B cell (primary cell): ENCODE measurements at regions of chr11 and their contacts with region 1.

Region 1: GRCh38 chr11:118435893-118436624 is at the start of gene KMT2A:
- DNase-seq: peak; percentile 98
- ATAC-seq: peak; percentile 67
- H3K4me3 ChIP-seq: peak within 1 kb of the TSS; percentile 80 to 93 (median 87)
- H3K4me3 Mint-ChIP-seq: peak within 1 kb of the TSS; percentile 97
- H3K27ac ChIP-seq: peak within 1 kb of the TSS; percentile 83 to 94
- H3K27ac Mint-ChIP-seq: peak within 1 kb of the TSS; percentile 99
- H3K4me1 ChIP-seq: peaks cover 24 to 31% of the 10 kb centered on the region in 2 donors
- H3K4me1 Mint-ChIP-seq: peaks cover 42% of the 10 kb centered on the region
- H3K27me3 ChIP-seq: no peaks in the 10 kb centered on the region
- H3K27me3 Mint-ChIP-seq: no peaks in the 10 kb centered on the region
- CTCF ChIP-seq: no peak
- total RNA-seq, gene KMT2A: 175 and 198 TPM in 2 replicates

Region 2: DNA sequence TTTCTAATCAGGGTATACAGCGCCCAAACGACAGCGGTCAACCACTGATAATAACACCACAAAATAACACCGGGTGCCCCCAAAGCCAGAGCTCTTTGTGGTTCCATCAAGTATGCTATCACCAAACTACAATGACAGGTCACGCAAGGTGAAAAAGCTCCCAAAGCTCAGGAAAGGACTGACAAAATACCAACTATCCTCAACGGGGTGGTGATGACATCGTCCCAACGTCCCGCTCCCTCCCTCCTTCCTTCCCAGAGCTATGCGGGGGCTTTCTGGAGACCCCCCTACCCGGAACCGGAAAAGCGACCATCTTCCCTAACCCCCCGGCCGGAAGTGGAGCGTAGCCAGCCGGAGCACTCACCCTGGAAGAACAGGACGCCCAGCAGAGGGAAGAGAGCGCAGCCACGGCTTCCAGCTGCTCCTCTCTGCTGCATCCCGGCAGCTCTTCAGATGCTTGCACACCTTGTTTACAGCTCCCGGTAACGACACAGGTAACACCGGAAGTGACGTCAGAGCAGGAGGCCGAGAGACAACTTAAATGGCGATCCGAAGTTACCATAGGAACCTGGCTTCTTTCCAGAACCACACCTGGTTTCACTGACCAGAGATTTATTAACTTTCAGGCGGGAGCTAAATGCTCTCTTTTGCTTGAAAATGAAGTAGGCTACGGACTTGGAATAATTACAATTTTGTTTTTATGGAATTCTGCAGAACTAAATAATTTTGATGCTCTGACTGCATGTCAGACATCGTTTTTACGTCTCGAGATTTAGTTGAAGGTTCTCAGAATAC is 184.0 kb before region 1 on chr11 and contains the start of gene MPZL3:
- CTCF ChIA-PET with region 1: interaction called, 3 read pairs
- POLR2A ChIA-PET with region 1: no interaction called
- intact Hi-C with region 1: loop called (anchors 5 kb)
- DNase-seq: peak; percentile 95
- ATAC-seq: peak; percentile 76
- H3K4me3 ChIP-seq: peak within 1 kb of the TSS; percentile 96 to 100 (median 97)
- H3K4me3 Mint-ChIP-seq: peak within 1 kb of the TSS; percentile 98
- H3K27ac ChIP-seq: peak within 1 kb of the TSS; percentile 91 to 97
- H3K27ac Mint-ChIP-seq: peak within 1 kb of the TSS; percentile 99
- H3K4me1 ChIP-seq: peaks cover 6 to 10% of the 10 kb centered on the region in 2 donors
- H3K4me1 Mint-ChIP-seq: peaks cover 13% of the 10 kb centered on the region
- H3K27me3 ChIP-seq: no peaks in the 10 kb centered on the region
- H3K27me3 Mint-ChIP-seq: peaks cover 20% of the 10 kb centered on the region
- CTCF ChIP-seq: no peak
- total RNA-seq, gene MPZL3: 4.2 and 4.9 TPM in 2 replicates

Region 3: DNA sequence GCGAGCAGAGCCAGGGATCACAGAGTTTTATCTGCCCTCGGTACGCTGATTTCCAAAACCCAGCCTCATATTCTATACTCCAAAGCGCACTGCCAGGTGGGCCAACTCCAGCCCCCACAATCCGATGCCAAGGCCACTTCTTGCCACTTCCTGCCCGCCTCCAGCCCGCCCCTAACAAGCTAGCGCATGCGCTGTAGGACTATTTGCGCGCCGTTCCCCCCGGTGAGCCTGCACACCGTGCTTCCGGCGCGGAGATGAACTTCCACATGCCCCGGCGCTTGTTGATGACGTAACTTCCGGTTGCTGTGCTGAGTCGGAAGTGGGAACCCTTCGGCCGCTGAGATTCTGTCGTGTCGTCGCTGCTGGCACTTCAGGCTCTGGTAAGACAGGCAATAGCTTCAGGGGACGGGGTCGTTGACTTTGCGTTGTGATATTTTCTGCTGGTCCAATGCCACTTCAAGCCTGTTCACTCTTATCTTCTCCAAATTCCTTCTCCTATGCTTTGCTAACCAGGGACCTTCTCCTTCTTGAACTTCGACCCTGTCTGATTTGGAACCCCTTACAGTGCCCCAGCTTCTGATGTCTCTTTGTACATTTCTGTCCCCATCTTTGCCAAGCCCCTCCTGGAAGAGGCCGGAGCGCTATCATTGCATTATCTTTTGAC is 76.6 kb before region 1 on chr11 and contains the start of gene UBE4A:
- CTCF ChIA-PET with region 1: no interaction called
- POLR2A ChIA-PET with region 1: no interaction called
- intact Hi-C with region 1: loop called (anchors 1 kb)
- DNase-seq: peak; percentile 97
- ATAC-seq: peak; percentile 91
- H3K4me3 ChIP-seq: peak within 1 kb of the TSS; percentile 82 to 98 (median 92)
- H3K4me3 Mint-ChIP-seq: peak within 1 kb of the TSS; percentile 98
- H3K27ac ChIP-seq: peak within 1 kb of the TSS; percentile 73 to 93
- H3K27ac Mint-ChIP-seq: peak within 1 kb of the TSS; percentile 96
- H3K4me1 ChIP-seq: peaks cover 18 to 23% of the 10 kb centered on the region in 2 donors
- H3K4me1 Mint-ChIP-seq: peaks cover 39% of the 10 kb centered on the region
- H3K27me3 ChIP-seq: no peaks in the 10 kb centered on the region
- H3K27me3 Mint-ChIP-seq: no peaks in the 10 kb centered on the region
- CTCF ChIP-seq: no peak
- total RNA-seq, gene UBE4A: 37.3 and 37.7 TPM in 2 replicates

Region 4: GRCh38 chr11:118401151-118401878 is 34.7 kb before region 1 on chr11 and contains the start of gene ATP5MG:
- CTCF ChIA-PET with region 1: interaction called, 12 read pairs
- POLR2A ChIA-PET with region 1: interaction called, 28 read pairs
- intact Hi-C with region 1: loop called (anchors 1 kb)
- DNase-seq: peak; percentile 97
- ATAC-seq: peak; percentile 84
- H3K4me3 ChIP-seq: peak within 1 kb of the TSS; percentile 77 to 96 (median 81)
- H3K4me3 Mint-ChIP-seq: peak within 1 kb of the TSS; percentile 98
- H3K27ac ChIP-seq: peak within 1 kb of the TSS; percentile 77 to 85
- H3K27ac Mint-ChIP-seq: peak within 1 kb of the TSS; percentile 100
- H3K4me1 ChIP-seq: peaks cover 27 to 32% of the 10 kb centered on the region in 2 donors
- H3K4me1 Mint-ChIP-seq: peaks cover 55% of the 10 kb centered on the region
- H3K27me3 ChIP-seq: no peaks in the 10 kb centered on the region
- H3K27me3 Mint-ChIP-seq: no peaks in the 10 kb centered on the region
- CTCF ChIP-seq: peak; percentile 18
- total RNA-seq, gene ATP5MG: 111 and 118 TPM in 2 replicates

Region 5: GRCh38 chr11:118488480-118489109 is 52.5 kb after region 1 on chr11:
- CTCF ChIA-PET with region 1: interaction called, 11 read pairs
- POLR2A ChIA-PET with region 1: no interaction called
- intact Hi-C with region 1: loop called (anchors 2 kb)
- DNase-seq: peak; percentile 84
- ATAC-seq: peak; percentile 60
- H3K4me3 ChIP-seq: no peak overlapping the region
- H3K4me3 Mint-ChIP-seq: no peak overlapping the region
- H3K27ac ChIP-seq: no peak overlapping the region
- H3K27ac Mint-ChIP-seq: no peak overlapping the region
- H3K4me1 ChIP-seq: no peaks in the 10 kb centered on the region
- H3K4me1 Mint-ChIP-seq: no peaks in the 10 kb centered on the region
- H3K27me3 ChIP-seq: no peaks in the 10 kb centered on the region
- H3K27me3 Mint-ChIP-seq: no peaks in the 10 kb centered on the region
- CTCF ChIP-seq: peak; percentile 92

Region 6: DNA sequence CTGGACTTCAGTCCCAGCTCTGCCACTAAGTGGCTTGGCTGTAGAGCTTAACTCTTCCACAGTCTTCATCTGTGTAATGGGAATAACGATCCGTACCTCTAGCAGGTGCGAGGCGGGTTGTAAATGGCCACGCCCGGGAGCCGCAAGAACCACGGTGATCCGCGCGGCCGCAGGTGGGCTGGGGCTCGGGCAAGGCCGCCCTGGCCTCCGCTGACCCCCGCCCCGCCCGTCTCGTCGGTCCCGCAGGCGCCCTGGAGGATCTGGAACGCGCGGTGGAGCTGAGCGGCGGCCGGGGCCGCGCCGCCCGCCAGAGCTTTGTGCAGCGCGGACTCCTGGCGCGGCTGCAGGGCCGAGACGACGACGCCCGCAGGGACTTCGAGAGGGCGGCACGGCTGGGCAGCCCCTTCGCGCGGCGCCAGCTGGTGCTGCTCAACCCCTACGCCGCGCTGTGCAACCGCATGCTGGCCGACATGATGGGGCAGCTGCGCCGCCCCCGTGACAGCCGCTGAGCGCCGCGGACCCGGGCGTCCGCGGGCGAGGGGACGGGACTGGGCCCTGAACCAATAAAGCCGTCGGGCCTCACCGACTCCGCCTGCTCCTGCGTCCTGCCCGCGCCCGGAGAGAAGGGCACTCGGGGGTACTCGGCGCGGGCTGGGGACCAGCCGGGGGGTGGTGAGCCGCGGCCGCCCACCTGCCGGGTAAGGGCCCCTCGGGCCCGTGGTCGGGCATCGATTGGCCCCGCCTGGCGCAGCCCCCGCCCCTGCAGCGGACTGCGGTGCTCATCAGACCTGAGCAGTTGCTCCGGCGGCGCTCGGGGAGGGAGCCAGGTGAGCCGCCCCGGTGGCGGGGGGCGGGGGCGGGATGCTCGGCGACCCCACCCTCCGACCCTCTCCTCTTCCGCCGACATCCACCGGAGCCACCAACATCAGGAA is 94.6 kb after region 1 on chr11 and contains the start of gene TMEM25:
- CTCF ChIA-PET with region 1: interaction called, 3 read pairs
- POLR2A ChIA-PET with region 1: interaction called, 4 read pairs
- intact Hi-C with region 1: loop called (anchors 2 kb)
- DNase-seq: peak; percentile 72
- ATAC-seq: peak; percentile 84
- H3K4me3 ChIP-seq: peak within 1 kb of the TSS; percentile 1 to 87 (median 73)
- H3K4me3 Mint-ChIP-seq: peak within 1 kb of the TSS; percentile 97
- H3K27ac ChIP-seq: peak within 1 kb of the TSS in 1 of 2 donors; percentile 42
- H3K27ac Mint-ChIP-seq: peak within 1 kb of the TSS; percentile 86
- H3K4me1 ChIP-seq: peaks cover 14 to 21% of the 10 kb centered on the region in 2 donors
- H3K4me1 Mint-ChIP-seq: peaks cover 24% of the 10 kb centered on the region
- H3K27me3 ChIP-seq: no peaks in the 10 kb centered on the region
- H3K27me3 Mint-ChIP-seq: no peaks in the 10 kb centered on the region
- CTCF ChIP-seq: no peak
- total RNA-seq, gene TMEM25: 16.3 and 16.9 TPM in 2 replicates

Region 7: GRCh38 chr11:118572061-118572980 is 136.3 kb after region 1 on chr11 and contains the start of gene ARCN1:
- CTCF ChIA-PET with region 1: no interaction called
- POLR2A ChIA-PET with region 1: interaction called, 3 read pairs
- intact Hi-C with region 1: loop called (anchors 5 kb)
- DNase-seq: peak; percentile 89
- ATAC-seq: peak; percentile 92
- H3K4me3 ChIP-seq: peak within 1 kb of the TSS; percentile 76 to 100 (median 99)
- H3K4me3 Mint-ChIP-seq: peak within 1 kb of the TSS; percentile 97
- H3K27ac ChIP-seq: peak within 1 kb of the TSS; percentile 95 to 97
- H3K27ac Mint-ChIP-seq: peak within 1 kb of the TSS; percentile 94
- H3K4me1 ChIP-seq: peaks cover 19 to 21% of the 10 kb centered on the region in 2 donors
- H3K4me1 Mint-ChIP-seq: peaks cover 44% of the 10 kb centered on the region
- H3K27me3 ChIP-seq: no peaks in the 10 kb centered on the region
- H3K27me3 Mint-ChIP-seq: no peaks in the 10 kb centered on the region
- CTCF ChIP-seq: no peak
- total RNA-seq, gene ARCN1: 74.7 and 83.2 TPM in 2 replicates

Region 8: DNA sequence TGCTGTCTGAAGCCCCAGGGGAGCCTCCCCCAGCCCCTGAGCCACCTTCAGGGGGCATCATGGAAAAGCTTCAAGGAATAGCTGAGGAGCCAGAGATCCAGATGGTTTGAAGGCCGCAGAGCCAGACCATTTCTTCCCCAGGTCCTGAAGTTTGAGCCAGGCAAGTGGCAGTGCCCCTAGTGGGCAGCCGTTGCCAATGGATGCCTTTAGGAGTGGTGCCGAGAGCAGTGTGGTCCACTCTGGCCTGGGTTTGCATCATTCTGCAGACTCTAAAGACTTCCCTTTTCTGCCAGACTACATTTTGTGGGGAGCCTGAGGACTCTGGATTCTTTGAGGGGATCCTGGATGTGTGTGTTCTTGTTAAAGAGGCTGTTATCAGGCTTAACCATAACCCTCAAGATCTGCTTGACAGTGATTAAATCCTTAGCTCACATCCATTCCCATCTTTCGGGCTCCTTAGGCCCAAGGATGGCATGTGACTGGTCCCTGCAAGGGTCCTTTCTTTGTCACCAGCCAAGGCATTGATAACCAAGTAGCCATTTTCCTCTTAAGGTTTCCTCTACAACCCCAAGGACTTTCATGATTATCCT is 698.4 kb after region 1 on chr11:
- CTCF ChIA-PET with region 1: no interaction called
- POLR2A ChIA-PET with region 1: no interaction called
- intact Hi-C with region 1: no loop called
- DNase-seq: no peak
- ATAC-seq: no peak
- H3K4me3 ChIP-seq: no peak overlapping the region
- H3K4me3 Mint-ChIP-seq: no peak overlapping the region
- H3K27ac ChIP-seq: no peak overlapping the region
- H3K27ac Mint-ChIP-seq: no peak overlapping the region
- H3K4me1 ChIP-seq: no peaks in the 10 kb centered on the region
- H3K4me1 Mint-ChIP-seq: no peaks in the 10 kb centered on the region
- H3K27me3 ChIP-seq: no peaks in the 10 kb centered on the region
- H3K27me3 Mint-ChIP-seq: peaks cover under 1% of the 10 kb centered on the region
- CTCF ChIP-seq: peak; percentile 43

Region 9: GRCh38 chr11:119806064-119806915 is 1370.2 kb after region 1 on chr11:
- CTCF ChIA-PET with region 1: no interaction called
- POLR2A ChIA-PET with region 1: no interaction called
- intact Hi-C with region 1: no loop called
- DNase-seq: no peak
- ATAC-seq: no peak
- H3K4me3 ChIP-seq: no peak overlapping the region
- H3K4me3 Mint-ChIP-seq: no peak overlapping the region
- H3K27ac ChIP-seq: no peak overlapping the region
- H3K27ac Mint-ChIP-seq: no peak overlapping the region
- H3K4me1 ChIP-seq: no peaks in the 10 kb centered on the region
- H3K4me1 Mint-ChIP-seq: no peaks in the 10 kb centered on the region
- H3K27me3 ChIP-seq: peaks cover 0 to 2% (median 0%) of the 10 kb centered on the region in 4 experiments
- H3K27me3 Mint-ChIP-seq: peaks cover 14% of the 10 kb centered on the region
- CTCF ChIP-seq: no peak